ENCODE measurements at regions of chr2 and their contacts with region 1.

Region 1: DNA sequence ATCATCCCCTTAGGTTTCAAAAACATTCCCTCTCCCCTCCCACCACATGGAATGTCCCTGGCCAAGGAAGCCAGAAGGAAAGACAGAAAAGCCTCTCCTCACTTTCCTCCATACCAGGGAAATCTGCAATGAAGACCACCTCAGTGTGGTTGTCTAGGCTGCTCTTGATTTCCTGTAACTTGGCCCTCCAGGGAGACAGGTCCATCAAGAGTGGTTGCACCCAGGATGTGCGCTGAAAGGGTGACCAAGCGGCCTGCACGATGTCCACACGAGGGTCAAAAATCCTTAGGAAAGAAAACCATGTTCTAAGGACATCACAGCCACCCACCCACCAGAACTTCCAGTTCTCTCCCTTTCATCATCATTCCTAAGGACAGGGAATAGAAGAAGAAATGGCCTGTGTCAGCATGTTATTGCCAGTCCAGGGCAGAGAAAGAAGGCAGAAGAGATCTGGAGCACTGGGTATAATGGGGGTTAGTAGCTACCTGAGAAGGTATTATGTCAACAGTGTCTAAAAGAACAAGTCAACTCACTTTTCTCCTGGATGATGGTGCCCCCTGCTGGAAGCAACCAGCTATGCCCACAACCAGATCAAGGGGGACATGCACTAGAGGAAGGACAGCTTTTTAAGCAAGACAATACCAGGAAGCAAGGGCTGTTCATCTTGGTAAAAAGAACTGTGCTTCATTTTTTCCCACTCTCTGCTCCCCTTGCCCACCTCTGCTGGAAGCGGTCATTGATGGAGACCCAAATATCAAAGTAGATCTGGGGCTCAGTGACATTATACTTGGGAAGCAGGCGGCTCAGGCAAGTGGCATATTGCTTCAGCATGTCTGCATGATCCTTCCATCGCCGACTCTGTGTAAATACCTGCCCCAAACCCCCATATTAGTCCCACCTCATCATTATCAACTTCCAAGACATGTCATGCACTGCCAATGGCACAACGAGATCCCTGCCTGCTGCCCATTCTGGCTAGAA is 9.3 kb downstream of the GGCX start:
- DNase-seq: peak; percentile 86 to 92 (median 88)
- ATAC-seq: peak; percentile 75
- H3K4me3 ChIP-seq: no peak overlapping the region
- H3K27ac ChIP-seq: peak overlapping the region; percentile 2 to 42 (median 26)
- H3K4me1 ChIP-seq: peaks cover 16% of the 10 kb centered on the region
- H3K27me3 ChIP-seq: no peaks in the 10 kb centered on the region
- CTCF ChIP-seq: peak; percentile 85 to 97 (median 96)
- POLR2A ChIP-seq: no peak

Region 2: GRCh38 chr2:85420536-85421259 is 131.3 kb before region 1 on chr2:
- intact Hi-C with region 1: loop called (anchors 5 kb)
- DNase-seq: peak; percentile 96 to 98 (median 98)
- ATAC-seq: peak; percentile 82
- H3K4me3 ChIP-seq: no peak overlapping the region
- H3K27ac ChIP-seq: peak overlapping the region; percentile 91 to 96 (median 94)
- H3K4me1 ChIP-seq: peaks cover 75% of the 10 kb centered on the region
- H3K27me3 ChIP-seq: no peaks in the 10 kb centered on the region
- CTCF ChIP-seq: peak; percentile 97 to 100 (median 100)
- POLR2A ChIP-seq: peak in 2 of 3 donors; percentile 72 to 73

Region 3: DNA sequence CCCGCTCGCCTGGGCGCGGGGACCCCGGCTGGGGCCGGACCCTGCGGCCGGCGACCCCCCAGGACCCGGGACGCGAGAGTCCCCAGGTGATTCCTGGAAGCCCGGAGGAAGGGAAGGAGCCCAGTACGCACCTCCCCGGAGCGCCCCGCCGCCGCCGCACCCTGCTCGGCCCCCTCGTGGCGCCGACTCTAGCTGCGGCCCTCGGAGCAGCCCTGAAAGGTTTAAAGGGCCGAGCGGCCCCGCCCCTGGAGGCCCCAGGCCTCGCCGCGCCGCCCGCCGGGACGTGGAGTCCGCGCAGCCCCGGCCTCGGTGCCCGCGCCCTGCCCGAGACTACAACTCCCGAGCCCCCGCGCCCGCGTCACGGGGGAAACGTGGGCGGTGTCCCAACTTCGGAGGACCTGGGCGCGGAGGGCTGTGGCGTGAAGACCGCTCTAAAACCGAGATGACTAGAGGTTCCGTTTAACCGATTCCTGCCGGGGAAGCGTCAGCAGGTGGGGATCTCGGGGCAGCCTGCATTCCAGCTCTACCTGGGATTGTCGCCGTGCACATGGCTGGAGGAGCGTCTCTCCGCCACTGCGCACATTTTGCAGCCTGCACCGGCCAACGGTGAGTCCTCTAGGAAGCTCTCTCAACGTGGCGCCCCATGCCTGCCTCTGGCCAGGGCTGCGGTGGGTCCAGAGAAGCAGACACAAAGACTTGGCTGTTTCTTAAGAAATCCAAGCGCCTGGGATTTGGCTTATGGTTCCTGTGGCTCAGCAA is 50.7 kb after region 1 on chr2 and contains the start of gene TMEM150A:
- intact Hi-C with region 1: loop called (anchors 10 kb)
- DNase-seq: peak; percentile 94 to 97 (median 96)
- ATAC-seq: peak; percentile 96
- H3K4me3 ChIP-seq: peak within 1 kb of the TSS; percentile 71 to 87
- H3K27ac ChIP-seq: peak within 1 kb of the TSS; percentile 85 to 90 (median 88)
- H3K4me1 ChIP-seq: peaks cover 75% of the 10 kb centered on the region
- H3K27me3 ChIP-seq: no peaks in the 10 kb centered on the region
- CTCF ChIP-seq: peak in 6 of 7 experiments; percentile 9 to 60 (median 36)
- POLR2A ChIP-seq: peak; percentile 78 to 96 (median 84)
- total RNA-seq, gene TMEM150A: 23.1 to 24.4 TPM